RWPE1 (cell line): ENCODE measurements at regions of chr1 and their contacts with region 1.

Region 1: DNA sequence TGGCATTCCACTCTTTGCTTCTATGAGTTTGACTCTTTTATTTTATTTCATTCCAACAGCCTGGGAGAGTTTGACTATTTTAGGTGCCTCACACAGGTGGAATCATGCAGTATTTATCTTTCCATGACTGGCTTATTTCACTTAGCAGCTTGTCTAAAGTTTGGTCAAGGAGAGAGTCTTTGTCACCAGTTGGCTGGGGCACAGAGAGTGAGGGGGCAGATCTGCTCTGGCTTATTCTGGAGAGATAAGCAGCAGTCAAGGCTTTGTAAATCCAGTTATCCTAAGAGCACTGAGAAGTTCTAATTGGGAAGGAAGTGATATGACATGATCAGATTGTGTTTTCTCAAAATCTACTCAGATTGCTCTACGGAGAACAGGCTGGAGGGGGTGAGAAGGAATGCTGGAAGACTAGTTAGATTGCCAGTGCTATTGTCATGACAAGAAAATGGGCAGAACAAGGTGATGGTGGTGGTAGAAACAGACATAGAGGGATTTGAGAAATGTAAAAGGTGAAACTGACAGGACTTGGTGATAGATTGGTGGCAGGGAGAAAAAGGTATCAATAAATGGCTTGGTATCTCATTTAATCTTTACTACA is 12.2 kb upstream of the CTTNBP2NL start:
- DNase-seq: no peak
- H3K27ac ChIP-seq: no peak overlapping the region
- CTCF ChIP-seq: no peak

Region 2: DNA sequence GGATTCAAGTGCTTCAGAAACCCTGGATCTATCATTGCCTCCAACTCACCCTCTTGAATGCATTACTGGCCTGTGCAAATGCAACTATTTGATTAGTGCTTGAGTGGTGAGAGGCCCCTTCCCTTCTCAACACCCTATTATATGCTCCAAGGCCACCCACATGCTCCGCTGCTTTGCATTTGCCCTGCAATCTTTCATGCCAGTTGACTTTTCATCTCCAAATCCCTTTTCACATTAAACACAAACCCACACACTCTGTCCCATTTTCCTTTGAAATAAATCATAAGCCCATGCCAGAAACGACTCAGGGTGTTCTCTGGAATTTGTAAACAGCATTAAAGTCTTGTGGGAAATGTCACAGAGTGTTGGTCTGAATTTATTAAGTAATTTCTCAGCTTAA is 66.7 kb before region 1 on chr1:
- CTCF ChIA-PET with region 1: no interaction called
- POLR2A ChIA-PET with region 1: no interaction called
- DNase-seq: no peak
- H3K27ac ChIP-seq: no peak overlapping the region
- CTCF ChIP-seq: no peak

Region 3: DNA sequence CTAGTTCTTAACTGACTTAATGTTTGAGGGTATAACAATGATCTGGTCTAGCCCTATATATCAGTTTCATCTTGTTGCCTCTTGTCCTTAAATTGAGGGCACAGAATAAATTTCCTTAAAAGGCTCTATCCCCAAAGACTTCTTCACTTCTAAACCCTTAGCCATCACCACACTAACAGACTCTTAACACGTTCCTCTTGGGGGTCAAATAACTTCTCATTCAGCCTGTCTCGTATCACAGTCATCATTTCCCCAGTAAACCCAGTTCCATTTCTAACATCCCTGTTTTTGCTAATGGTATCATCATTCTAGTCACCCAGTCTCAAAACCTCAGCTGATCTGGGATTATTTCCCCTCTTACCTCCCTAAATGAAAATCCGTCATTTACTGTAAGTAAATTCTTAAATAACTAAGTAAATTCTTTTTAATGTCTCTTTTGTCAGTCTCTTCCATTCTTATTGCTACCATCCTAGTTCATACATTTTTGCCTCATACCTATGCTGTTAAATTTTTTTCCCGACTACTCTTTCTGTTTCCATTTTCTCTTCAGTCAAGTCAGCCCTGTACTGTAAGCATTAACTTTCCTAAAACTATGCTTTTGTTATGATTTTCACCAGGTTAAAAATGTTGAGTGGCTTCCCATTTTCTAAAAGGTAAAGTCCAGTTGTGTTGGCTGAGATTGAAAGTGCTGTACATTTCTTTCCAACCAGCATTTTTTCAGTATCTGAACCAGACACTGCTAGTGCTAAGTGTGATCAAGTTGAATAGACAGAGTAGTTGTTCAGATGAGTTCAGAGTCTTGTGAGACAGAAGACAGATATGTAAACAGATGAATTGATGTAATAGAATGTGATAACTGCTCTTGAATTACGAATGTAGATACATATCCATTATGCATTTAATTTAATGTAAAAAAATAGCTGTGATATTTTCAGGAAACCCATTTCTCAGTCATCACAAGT is 19.1 kb after region 1 on chr1:
- CTCF ChIA-PET with region 1: no interaction called
- POLR2A ChIA-PET with region 1: no interaction called
- DNase-seq: no peak
- H3K27ac ChIP-seq: no peak overlapping the region
- CTCF ChIP-seq: no peak

Region 4: GRCh38 chr1:112488141-112488540 is 104.3 kb after region 1 on chr1:
- CTCF ChIA-PET with region 1: no interaction called
- POLR2A ChIA-PET with region 1: interaction called, 17 read pairs
- DNase-seq: no peak
- H3K27ac ChIP-seq: no peak overlapping the region
- CTCF ChIP-seq: no peak